ENCODE measurements at regions of chr2 and their contacts with region 1.

Region 1: DNA sequence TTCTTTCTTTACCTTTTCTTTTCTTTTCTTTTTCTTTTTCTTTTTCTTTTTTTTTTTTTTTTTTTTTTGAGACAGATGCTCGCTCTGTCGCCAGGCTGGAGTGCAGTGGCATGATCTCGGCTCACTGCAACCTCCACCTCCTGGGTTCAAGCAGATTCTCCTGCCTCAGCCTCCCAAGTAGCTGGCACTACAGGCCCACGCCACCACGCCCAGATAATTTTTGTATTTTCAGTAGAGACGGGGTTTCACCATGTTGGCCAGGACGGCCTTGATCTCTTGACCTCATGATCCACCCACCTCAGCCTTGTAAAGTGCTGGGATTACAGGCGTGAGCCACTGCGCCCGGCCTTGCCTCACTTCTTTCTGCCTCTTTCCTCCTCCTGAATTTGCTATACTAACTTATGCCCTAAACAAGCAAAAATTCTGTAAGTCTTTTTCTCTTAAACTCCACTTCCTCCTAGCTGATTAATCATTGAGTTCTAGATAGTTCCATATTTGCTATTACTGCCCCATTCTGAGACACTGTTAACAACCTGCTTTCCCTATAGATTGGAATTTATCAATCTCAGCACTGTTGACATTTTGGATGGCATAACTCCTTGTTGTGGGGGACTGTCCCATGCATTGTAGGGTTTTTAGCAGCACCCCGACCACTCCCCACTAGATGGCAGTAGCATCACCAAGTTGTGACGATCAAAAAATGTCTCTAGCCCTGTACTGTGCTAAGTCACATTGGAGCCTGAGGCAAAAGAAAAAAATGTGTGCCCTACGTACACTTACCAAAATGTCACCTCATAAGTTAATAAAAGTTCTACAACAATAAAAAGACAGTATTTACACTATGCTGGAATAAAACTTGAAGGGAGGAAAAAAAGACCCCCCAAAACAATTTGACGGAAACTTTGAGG is 16.4 kb upstream of the THADA start:
- DNase-seq: peak; percentile 73
- H3K4me3 ChIP-seq: no peak overlapping the region
- H3K27ac ChIP-seq: no peak overlapping the region
- H3K4me1 ChIP-seq: no peaks in the 10 kb centered on the region
- H3K27me3 ChIP-seq: no peaks in the 10 kb centered on the region
- CTCF ChIP-seq: peak; percentile 86 to 87
- POLR2A ChIP-seq: no peak

Region 2: DNA sequence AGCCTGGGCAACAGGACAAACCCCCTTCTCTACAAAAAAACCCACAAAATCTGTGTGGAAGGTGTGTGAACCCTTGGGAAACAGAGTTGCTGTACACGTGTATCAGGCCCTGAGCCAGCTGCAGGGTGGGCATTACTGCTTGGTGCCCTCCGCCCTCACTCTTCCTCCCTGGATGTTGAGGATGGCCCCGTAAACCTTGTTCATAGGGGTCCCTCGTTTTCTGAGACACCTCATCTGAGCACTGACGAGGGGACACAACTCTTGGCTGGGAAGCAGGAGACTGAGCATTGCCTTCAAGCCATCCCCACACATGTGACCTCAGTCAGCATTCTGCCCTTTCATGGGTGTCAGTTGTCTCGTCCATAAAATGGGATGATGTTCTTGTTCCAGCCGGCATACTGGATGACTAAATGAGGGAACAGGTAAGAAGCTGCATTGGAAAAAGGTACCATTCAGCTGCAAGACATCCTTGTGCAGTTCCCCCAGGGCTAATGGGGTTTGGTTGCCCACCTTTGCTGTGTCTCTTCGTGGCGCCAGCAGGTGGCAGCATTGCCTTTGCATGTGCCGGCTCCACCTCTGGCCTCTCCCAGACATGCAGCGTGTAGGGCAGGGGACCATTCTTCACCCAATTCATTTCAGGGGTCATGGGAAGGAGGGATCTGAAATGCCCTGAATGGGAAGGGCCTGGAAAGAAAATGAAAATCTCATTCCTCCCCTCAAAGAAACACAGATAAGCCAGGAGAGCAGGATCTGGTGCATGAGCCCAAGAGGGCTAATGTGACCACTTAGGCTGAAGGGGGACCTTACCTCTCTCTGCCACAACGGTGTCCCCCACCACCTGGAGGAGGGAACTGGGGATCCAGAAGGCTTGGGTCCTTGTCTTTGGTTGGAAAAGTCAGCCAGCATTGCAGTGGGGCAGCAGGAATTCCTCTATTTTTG is 783.5 kb before region 1 on chr2:
- CTCF ChIA-PET with region 1: interaction called, 3 read pairs
- POLR2A ChIA-PET with region 1: no interaction called
- dilution Hi-C with region 1: no loop called
- intact Hi-C with region 1: loop called (anchors 1 kb)
- DNase-seq: peak; percentile 66
- H3K4me3 ChIP-seq: no peak overlapping the region
- H3K27ac ChIP-seq: no peak overlapping the region
- H3K4me1 ChIP-seq: no peaks in the 10 kb centered on the region
- H3K27me3 ChIP-seq: no peaks in the 10 kb centered on the region
- CTCF ChIP-seq: peak; percentile 91 to 93
- POLR2A ChIP-seq: no peak

Region 3: DNA sequence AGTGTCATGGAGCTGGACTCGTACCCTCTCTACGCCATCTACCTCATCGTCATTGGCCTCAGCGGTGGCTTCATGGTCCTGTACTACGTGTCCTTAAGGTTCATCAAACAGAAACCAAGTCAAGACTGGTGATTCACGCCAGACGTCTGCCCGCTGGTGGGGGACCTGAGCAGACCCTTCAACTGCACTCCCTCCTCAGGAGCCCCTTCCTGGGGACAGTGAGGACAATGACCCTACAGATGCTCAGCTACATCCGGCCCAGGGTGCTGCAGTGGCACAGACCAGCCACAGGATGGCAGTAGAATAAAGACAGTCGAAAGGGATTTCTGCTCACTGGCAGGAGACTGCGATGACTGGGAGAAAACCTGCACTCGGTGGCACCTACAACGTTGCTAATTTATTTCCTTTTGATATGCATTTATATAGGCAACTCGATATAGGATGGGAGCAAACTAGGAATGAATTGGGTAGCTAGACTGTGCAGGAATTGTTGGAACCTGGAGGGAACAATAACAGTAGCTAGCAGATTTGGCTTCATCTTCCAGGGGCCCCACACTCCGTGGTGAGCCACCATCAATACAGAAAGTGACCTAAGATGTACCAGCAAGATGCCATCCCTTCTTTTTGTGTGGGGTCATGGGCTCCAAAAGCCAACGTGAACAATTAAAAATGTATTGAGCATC is 265.7 kb after region 1 on chr2:
- CTCF ChIA-PET with region 1: interaction called, 8 read pairs
- POLR2A ChIA-PET with region 1: no interaction called
- dilution Hi-C with region 1: no loop called
- intact Hi-C with region 1: loop called (anchors 1 kb)
- DNase-seq: peak; percentile 59
- H3K4me3 ChIP-seq: no peak overlapping the region
- H3K27ac ChIP-seq: no peak overlapping the region
- H3K4me1 ChIP-seq: no peaks in the 10 kb centered on the region
- H3K27me3 ChIP-seq: peaks cover 0 to 2% of the 10 kb centered on the region in 2 experiments
- CTCF ChIP-seq: peak; percentile 87 to 89
- POLR2A ChIP-seq: no peak